Endothelial cell of umbilical vein (primary cell): ENCODE measurements at regions of chr3 and their contacts with region 1.

Region 1: DNA sequence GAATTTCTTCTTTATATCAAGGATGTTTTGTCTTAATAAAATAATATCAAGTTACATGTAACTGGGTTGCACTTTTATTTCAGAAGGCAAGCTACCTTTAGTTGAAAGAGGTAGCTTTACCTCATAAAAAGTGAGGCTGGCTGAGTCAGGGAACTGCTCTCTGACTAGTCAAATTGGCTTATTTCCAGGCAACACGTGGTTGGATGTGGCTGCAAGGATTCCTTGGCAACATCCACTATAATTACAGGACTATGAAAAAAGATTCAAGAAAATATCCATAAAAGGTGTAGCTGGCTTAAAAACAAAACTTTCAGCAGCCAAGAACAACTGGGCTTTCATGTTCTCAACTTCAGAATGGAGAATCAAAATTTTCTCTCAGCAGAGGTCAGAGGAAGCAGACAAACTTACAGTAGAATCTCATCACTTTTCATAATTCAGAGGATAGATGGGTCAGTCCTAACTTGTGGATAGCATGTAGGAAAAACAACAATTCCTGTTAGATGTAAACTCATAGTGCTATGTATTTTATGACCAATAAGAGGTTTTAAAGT is 779.1 kb downstream of the MECOM start:
- DNase-seq: peak; percentile 86
- H3K4me3 ChIP-seq: no peak overlapping the region
- H3K27ac ChIP-seq: no peak overlapping the region
- H3K4me1 ChIP-seq: peaks cover 12% of the 10 kb centered on the region
- H3K27me3 ChIP-seq: no peaks in the 10 kb centered on the region
- CTCF ChIP-seq: no peak
- POLR2A ChIP-seq: no peak

Region 2: DNA sequence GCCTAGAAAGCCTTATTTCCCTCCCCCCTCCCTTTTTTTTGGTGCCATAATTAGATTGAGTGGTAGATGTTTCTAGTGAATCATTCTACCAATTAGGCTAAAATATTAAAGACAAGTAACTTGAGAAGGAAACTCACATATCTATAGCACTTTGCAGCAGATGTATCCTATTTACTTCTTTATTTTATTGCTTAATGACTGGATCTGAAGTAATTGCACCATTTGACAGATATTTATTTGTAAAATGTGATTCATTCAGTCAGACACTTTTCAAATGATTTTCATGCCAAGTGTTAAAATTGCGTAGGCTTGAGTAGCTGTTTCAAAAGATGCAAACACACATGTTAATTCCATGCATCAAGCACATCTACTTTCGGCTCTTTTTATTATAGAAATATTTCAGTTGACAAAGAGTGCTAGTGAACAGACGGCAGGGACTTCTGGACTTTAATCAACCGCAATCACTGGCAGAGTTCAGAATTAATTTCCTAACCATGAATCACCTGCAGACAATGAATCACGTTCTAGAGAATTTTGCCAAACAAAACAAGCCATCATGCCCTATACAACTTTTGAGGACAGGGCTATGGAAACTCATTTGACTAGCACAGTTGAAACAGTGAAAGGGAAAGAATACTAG is 142.2 kb after region 1 on chr3:
- CTCF ChIA-PET with region 1: no interaction called
- POLR2A ChIA-PET with region 1: no interaction called
- dilution Hi-C with region 1: no loop called
- intact Hi-C with region 1: loop called (anchors 5 kb)
- DNase-seq: peak; percentile 96
- H3K4me3 ChIP-seq: peak overlapping the region in 1 of 3 experiments; percentile 45
- H3K27ac ChIP-seq: peak overlapping the region; percentile 75
- H3K4me1 ChIP-seq: peaks cover 21% of the 10 kb centered on the region
- H3K27me3 ChIP-seq: no peaks in the 10 kb centered on the region
- CTCF ChIP-seq: no peak
- POLR2A ChIP-seq: peak; percentile 24